ENCODE measurements at regions of chr11 and their contacts with region 1.

Region 1: GRCh38 chr11:31958076-31958735 is 132.7 kb upstream of the RCN1 start:
- DNase-seq: no peak
- H3K4me3 ChIP-seq: no peak overlapping the region
- CTCF ChIP-seq: peak; percentile 86

Region 2: DNA sequence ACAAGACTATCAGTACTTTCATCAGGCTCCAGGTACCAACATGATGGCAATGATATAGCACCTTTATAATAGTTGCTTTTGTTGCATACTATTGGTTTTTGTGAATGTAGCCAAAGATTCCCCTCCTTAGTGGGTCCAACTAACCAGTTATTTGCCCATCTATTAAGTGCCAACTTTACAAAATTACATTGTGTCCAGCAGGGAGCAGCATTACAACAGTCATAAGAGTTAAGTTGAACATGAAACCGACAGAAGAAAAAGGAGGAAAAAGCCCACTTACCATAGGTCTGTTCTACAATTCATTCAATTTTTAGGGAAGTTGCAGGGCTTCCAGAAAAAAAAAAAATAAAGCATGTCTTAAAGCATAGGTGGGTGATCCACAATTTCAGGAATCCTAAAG is 470.4 kb before region 1 on chr11:
- CTCF ChIA-PET with region 1: interaction called, 27 read pairs
- POLR2A ChIA-PET with region 1: no interaction called
- DNase-seq: no peak
- H3K4me3 ChIP-seq: no peak overlapping the region
- CTCF ChIP-seq: peak; percentile 26

Region 3: DNA sequence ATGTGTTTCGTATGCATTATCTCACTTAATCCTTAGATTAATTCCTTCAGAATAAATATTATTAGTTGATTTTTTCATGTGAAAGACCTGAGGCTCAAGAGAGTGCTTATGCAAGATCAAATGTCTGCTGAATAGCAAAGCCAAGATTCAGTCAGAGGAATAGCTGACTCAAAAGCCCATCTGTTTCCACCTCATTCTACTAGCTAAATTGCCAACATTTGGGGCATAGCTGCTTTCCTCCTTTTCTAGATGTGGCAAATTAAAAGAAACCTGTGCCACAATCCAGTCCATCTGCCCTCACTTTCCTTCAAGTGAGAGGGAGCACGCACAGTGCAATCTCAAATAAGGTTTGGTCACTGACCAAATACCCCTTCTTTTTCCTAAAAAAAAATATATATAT is 268.2 kb before region 1 on chr11:
- CTCF ChIA-PET with region 1: no interaction called
- POLR2A ChIA-PET with region 1: no interaction called
- DNase-seq: no peak
- H3K4me3 ChIP-seq: no peak overlapping the region
- CTCF ChIP-seq: no peak

Region 4: DNA sequence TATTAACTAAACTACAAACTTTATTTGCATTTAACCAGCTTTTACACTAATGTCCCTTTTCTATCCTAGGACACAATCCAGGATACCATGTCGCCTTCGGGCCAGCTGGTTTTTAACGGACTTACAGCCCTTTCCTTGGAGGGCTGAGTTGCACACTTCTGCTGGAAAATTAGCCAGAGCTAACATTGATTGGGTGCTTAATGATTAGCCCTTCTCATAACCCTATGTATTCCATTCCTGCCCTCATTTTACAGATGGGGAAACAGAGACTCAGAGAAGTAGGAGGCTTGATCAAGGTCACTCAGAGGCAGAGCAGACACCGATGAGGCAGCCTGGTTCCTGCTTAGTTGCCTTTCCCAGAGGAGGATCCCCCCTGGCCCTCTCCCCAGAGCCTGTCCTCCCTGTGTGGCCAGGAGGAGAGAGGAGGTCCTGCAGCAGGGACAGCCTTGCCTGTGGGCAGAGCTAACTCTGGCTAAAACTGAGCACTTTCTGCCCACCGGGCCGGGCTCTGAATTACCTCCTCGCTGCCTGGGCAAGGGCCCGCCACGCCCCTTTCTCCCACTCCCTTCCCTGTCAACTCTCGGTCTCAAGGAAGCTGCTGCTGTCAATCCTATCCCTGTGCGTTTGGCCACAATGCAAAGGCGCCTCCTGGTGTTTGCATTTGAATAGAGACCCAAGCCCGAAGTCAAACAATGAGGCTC is 87.4 kb before region 1 on chr11:
- CTCF ChIA-PET with region 1: interaction called, 40 read pairs
- POLR2A ChIA-PET with region 1: no interaction called
- DNase-seq: no peak
- H3K4me3 ChIP-seq: no peak overlapping the region
- CTCF ChIP-seq: peak; percentile 75

Region 5: DNA sequence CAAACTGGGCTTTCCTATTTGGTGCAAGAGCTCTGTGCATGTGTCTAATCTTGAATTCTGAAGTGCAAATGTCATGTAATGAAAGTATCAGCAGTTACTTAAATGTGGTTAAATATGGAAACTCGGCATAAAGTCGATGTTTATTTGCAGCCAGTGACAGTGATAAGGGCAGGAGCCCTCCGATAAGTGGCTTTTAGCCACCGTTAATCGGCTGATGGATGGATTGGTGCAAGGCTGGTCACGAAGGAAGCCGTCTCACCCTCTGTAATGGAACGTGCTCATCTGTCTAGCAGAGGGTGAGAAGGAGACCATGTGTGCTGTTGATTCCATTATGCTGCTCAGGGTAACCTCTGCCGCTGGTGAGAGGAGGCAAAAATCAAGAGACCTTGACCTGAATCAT is 25.3 kb before region 1 on chr11:
- CTCF ChIA-PET with region 1: interaction called, 49 read pairs
- POLR2A ChIA-PET with region 1: no interaction called
- DNase-seq: no peak
- H3K4me3 ChIP-seq: no peak overlapping the region
- CTCF ChIP-seq: no peak

Region 6: GRCh38 chr11:31968461-31969358 is 10.5 kb after region 1 on chr11:
- CTCF ChIA-PET with region 1: interaction called, 80 read pairs
- POLR2A ChIA-PET with region 1: no interaction called
- DNase-seq: peak; percentile 28
- H3K4me3 ChIP-seq: no peak overlapping the region
- CTCF ChIP-seq: no peak

Region 7: DNA sequence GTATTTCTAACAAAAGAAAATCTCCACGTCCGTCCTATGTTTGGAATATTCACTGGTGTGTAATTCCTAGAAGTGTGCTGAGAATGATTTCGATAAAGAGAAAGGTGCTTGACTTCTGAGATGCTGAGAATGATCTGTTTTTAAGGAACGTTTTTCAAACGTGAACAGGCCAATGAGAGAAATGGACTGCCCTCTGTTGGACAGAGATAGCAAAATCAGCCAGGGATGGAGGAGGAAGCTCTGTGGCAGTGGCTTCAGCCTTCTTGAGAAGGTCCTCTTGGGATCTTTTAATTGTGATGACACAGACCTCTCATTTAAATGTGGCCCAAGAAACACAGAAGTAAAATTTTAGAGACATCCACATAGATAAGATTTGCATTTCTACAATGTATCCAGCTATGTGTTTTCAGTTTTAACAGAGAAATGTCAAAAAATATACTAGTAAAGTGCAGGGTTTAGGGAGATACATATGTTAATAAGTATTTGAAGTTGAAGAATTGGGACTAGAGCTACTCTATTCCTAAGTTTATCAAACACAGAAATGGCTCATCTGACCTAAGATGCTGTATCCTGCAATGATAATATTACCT is 48.7 kb after region 1 on chr11:
- CTCF ChIA-PET with region 1: interaction called, 12 read pairs
- POLR2A ChIA-PET with region 1: no interaction called
- DNase-seq: peak; percentile 5
- H3K4me3 ChIP-seq: no peak overlapping the region
- CTCF ChIP-seq: peak; percentile 80